HEK293 (cell line): ENCODE measurements at regions of chr17 and their contacts with region 1.

Region 1: GRCh38 chr17:41688699-41689496 is at the start of gene EIF1:
- H3K4me3 ChIP-seq: peak within 1 kb of the TSS; percentile 96
- H3K27ac ChIP-seq: peak within 1 kb of the TSS; percentile 89
- H3K4me1 ChIP-seq: no peaks in the 10 kb centered on the region
- CTCF ChIP-seq: 0 out of 2 replicates have a peak, but pooled peaks have one; percentile 17

Region 2: GRCh38 chr17:40922239-40922638 is 766.7 kb before region 1 on chr17:
- CTCF ChIA-PET with region 1: no interaction called
- POLR2A ChIA-PET with region 1: no interaction called
- H3K4me3 ChIP-seq: no peak overlapping the region
- H3K27ac ChIP-seq: no peak overlapping the region
- H3K4me1 ChIP-seq: no peaks in the 10 kb centered on the region
- CTCF ChIP-seq: no peak

Region 3: GRCh38 chr17:41530062-41531051 is 158.5 kb before region 1 on chr17:
- CTCF ChIA-PET with region 1: interaction called, 4 read pairs
- POLR2A ChIA-PET with region 1: interaction called, 13 read pairs
- H3K4me3 ChIP-seq: no peak overlapping the region
- H3K27ac ChIP-seq: peak overlapping the region; percentile 32
- H3K4me1 ChIP-seq: peaks cover 14% of the 10 kb centered on the region
- CTCF ChIP-seq: no peak

Region 4: DNA sequence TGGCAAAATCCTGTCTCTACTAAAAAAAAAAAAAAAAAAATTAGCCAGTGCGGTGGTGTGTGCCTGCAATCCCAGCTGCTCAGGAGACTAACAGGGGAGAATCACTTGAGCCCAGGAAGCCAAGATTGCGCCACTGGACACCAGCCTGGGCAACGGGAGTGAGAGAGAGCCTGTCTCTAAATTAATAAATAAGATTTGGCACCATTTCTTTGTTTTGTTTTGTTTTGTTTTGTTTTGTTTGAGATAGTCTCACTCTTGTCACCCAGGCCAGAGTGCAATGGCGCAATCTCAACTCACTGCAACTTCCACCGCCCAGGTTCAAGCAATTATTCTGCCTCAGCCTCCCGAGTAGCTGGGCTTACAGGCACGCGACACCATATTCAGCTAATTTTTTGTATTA is 13.8 kb after region 1 on chr17:
- CTCF ChIA-PET with region 1: interaction called, 103 read pairs
- POLR2A ChIA-PET with region 1: interaction called, 24 read pairs
- H3K4me3 ChIP-seq: no peak overlapping the region
- H3K27ac ChIP-seq: no peak overlapping the region
- H3K4me1 ChIP-seq: no peaks in the 10 kb centered on the region
- CTCF ChIP-seq: no peak

Region 5: GRCh38 chr17:41724476-41725050 is 35.7 kb after region 1 on chr17:
- CTCF ChIA-PET with region 1: interaction called, 3 read pairs
- POLR2A ChIA-PET with region 1: interaction called, 21 read pairs
- H3K4me3 ChIP-seq: no peak overlapping the region
- H3K27ac ChIP-seq: no peak overlapping the region
- H3K4me1 ChIP-seq: no peaks in the 10 kb centered on the region
- CTCF ChIP-seq: no peak

Region 6: GRCh38 chr17:41786227-41787020 is 97.5 kb after region 1 on chr17 and contains the start of gene JUP:
- CTCF ChIA-PET with region 1: no interaction called
- POLR2A ChIA-PET with region 1: interaction called, 36 read pairs
- H3K4me3 ChIP-seq: peak within 1 kb of the TSS; percentile 61
- H3K27ac ChIP-seq: peak within 1 kb of the TSS; percentile 53; the same call in 1 of the 2 replicates
- H3K4me1 ChIP-seq: peaks cover 12% of the 10 kb centered on the region
- CTCF ChIP-seq: peak; percentile 40

Region 7: DNA sequence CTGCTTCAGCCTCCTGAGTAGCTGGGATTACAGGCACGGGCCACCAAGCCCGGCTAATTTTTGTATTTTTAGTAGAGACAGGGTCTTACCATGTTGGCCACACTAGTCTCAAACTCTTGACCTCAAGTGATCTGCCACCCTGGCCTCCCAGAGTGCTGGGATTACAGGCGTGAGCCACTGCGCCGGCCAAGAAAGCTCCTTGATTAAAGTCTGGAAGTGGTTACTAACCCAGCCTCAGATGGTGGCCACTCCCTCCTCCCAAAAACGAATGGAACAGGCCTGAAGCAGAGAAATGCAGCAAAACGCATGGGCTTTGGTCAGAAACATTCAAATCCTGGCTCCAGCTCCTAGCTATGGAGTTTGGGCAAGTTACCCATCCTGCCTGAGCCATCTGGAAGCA is 135.2 kb after region 1 on chr17:
- CTCF ChIA-PET with region 1: no interaction called
- POLR2A ChIA-PET with region 1: interaction called, 10 read pairs
- H3K4me3 ChIP-seq: no peak overlapping the region
- H3K27ac ChIP-seq: no peak overlapping the region
- H3K4me1 ChIP-seq: no peaks in the 10 kb centered on the region
- CTCF ChIP-seq: no peak